SK-N-SH (cell line): ENCODE measurements at regions of chr10 and their contacts with region 1.

Region 1: DNA sequence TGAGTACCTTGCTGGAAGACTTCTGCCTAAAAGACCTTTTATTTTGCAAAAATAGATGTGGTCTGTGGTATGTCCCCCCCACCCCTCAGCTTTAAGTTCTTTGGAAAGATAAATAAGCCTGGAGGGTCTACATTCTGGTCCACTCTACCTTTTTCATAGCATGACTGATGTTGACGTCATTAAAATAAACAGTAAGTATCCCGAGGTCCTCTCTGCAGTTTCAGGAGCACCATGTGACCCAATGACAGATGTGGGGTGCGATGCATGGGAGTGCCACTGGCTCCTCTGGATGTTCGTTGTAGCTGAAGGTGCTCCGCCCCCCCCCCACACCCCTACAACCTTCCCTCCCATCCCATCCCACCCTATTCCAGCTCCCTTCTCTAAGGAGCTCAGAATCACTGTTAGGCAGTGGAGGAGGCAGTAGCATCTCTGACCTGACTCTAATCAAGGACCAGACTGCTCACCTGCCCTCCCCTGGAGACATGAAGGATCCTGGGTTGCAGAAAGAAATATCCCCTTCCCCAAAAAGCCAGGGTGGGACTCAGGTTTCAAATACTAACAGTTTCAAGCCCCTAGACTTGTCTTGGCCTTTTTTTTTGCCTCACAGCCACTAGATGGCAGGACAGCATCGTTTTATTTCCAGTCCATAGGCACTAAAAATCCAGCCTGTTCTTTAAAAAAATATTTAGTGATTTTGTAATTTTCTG is 25.1 kb downstream of the CASP7 start:
- DNase-seq: peak; percentile 46
- H3K4me3 ChIP-seq: peak overlapping the region in 1 of 2 experiments; percentile 30; a peak in 1 of 4 replicates
- H3K27ac ChIP-seq: no peak overlapping the region
- H3K4me1 ChIP-seq: peaks cover 0 to 22% of the 10 kb centered on the region in 2 experiments; a peak in 2 of 4 replicates
- H3K27me3 ChIP-seq: no peaks in the 10 kb centered on the region
- CTCF ChIP-seq: peak; percentile 85
- EP300 ChIP-seq: no peak
- RAD21 ChIP-seq: peak; percentile 76

Region 2: DNA sequence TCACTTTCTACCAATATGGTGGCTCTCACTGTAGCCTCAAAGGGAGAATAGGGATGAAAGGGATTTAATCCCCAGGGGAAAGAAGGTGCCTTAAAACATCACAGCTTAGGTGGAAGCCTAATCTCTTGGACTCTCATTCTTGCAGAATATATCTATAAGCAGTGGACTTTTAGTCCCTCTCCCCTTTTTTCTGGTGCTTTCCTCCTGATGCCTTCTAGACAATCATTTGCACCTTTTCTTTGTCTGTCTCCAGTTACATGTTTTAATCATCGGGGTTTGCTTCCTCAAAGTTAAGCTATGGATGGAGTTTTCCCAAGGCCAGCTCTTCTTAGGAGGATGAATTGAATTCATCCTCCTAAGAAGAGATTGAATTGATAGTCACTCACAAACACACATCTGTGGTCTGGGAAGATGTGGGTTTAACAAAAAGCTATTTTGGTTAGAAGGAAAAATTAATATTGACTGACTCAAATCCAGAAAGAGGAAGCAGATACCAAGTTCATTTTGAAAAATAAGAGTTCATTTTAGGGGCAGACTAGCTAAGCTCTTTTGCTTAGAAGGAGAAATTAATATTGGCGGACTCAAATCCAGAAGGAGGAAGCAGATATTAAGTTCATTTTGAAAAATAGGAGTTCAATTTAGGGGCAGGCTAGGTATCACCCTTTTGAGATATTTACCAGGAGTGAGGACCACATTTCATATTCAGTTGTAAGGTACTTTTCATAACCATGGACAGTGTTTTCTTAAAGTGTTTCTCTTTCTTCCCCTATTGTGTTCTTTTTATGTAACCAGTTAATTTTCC is 11.5 kb after region 1 on chr10:
- CTCF ChIA-PET with region 1: interaction called, 33 read pairs
- POLR2A ChIA-PET with region 1: no interaction called
- DNase-seq: no peak
- H3K4me3 ChIP-seq: no peak overlapping the region
- H3K27ac ChIP-seq: no peak overlapping the region
- H3K4me1 ChIP-seq: peaks cover 2 to 4% of the 10 kb centered on the region in 2 experiments; a peak in 2 of 4 replicates
- H3K27me3 ChIP-seq: no peaks in the 10 kb centered on the region
- CTCF ChIP-seq: no peak
- EP300 ChIP-seq: no peak
- RAD21 ChIP-seq: no peak

Region 3: GRCh38 chr10:113872139-113873030 is 167.6 kb after region 1 on chr10:
- CTCF ChIA-PET with region 1: no interaction called
- POLR2A ChIA-PET with region 1: no interaction called
- DNase-seq: no peak
- H3K4me3 ChIP-seq: no peak overlapping the region
- H3K27ac ChIP-seq: no peak overlapping the region
- H3K4me1 ChIP-seq: no peaks in the 10 kb centered on the region; a peak in 1 of 4 replicates
- H3K27me3 ChIP-seq: no peaks in the 10 kb centered on the region
- CTCF ChIP-seq: no peak
- EP300 ChIP-seq: no peak
- RAD21 ChIP-seq: no peak

Region 4: DNA sequence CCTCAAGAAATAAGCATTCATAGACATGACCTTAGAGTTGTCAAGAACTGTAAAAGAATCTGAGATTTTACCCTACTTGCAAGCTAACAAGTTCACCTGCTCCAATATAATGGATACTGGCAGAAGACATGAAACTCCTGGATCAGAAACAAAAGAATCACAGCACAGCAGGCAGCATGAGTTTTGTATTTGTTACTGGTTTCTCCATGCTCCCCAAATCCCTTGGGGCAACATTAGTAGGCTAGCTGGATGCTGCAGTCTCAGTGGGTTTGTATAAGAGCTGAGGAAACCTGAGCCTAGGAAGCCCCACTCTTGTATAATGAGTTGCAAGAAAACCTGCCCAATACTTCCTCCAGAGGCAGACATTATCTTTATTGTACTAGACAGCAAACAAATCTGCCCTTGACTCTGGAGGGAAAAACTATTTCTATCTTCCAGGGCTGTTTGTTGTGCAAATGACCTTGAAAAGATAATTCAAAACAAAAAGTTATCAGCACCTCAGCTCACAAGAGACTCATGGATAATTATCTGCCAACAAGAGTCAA is 888.5 kb after region 1 on chr10:
- CTCF ChIA-PET with region 1: no interaction called
- POLR2A ChIA-PET with region 1: no interaction called
- DNase-seq: no peak
- H3K4me3 ChIP-seq: no peak overlapping the region
- H3K27ac ChIP-seq: no peak overlapping the region
- H3K4me1 ChIP-seq: no peaks in the 10 kb centered on the region
- H3K27me3 ChIP-seq: no peaks in the 10 kb centered on the region
- CTCF ChIP-seq: no peak
- EP300 ChIP-seq: no peak
- RAD21 ChIP-seq: no peak